MCF 10A (cell line): ENCODE measurements at regions of chr2 and their contacts with region 1.

Region 1: DNA sequence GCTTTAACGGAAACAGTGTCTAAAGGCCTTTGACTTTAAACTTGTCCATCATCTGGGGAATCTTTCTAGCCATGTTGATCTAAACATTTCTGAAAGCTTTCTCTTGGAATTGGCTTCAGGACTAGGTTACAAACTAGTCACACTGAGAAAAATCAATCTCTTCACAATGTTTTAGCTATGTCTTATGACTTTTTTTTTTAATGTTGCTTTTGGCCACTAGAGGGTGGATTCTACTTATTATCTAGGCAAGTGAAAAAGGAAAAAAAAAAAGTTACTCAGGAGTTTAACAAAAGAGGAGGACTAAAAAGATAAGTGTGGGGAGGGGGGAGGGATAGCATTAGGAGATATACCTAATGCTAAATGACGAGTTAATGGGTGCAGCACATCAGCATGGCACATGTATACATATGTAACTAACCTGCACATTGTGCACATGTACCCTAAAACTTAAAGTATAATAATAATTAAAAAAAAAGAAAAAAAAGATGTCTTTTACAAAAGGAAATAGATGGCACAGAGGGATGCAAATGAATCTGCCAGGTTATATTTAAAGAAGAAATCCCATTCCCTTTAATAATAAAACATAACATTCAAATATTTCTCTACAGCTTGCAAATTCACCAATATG is 160.4 kb upstream of the PID1 start:
- DNase-seq: peak; percentile 69
- H3K4me3 Mint-ChIP-seq: no peak overlapping the region
- H3K27ac Mint-ChIP-seq: peak overlapping the region; percentile 75
- H3K4me1 Mint-ChIP-seq: peaks cover 32% of the 10 kb centered on the region
- H3K27me3 Mint-ChIP-seq: no peaks in the 10 kb centered on the region
- CTCF ChIP-seq: peak; percentile 48

Region 2: GRCh38 chr2:228699400-228699799 is 732.0 kb before region 1 on chr2:
- CTCF ChIA-PET with region 1: no interaction called
- POLR2A ChIA-PET with region 1: no interaction called
- intact Hi-C with region 1: loop called (anchors 5 kb)
- DNase-seq: peak; percentile 59
- H3K4me3 Mint-ChIP-seq: no peak overlapping the region
- H3K27ac Mint-ChIP-seq: no peak overlapping the region
- H3K4me1 Mint-ChIP-seq: peaks cover 10% of the 10 kb centered on the region
- H3K27me3 Mint-ChIP-seq: no peaks in the 10 kb centered on the region
- CTCF ChIP-seq: peak; percentile 51

Region 3: DNA sequence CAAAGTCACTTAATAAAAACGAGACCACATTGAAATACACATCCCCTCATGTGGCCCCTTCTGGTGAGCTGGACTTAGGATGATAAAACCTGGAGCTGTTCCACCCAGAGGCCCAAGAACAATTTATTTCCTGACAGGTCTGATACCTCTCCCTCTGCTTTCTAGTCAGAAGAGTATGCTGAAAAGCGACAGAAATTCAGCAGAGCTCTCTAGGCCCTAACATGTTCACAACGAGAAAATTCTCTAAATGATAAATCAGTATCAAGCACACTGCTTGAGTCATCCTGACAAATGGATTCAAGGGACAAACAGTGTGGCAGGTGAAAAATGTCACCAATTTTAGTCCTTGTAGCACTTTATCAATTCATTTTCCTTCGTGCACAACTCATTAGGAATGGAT is 393.8 kb before region 1 on chr2:
- CTCF ChIA-PET with region 1: no interaction called
- POLR2A ChIA-PET with region 1: no interaction called
- intact Hi-C with region 1: no loop called
- DNase-seq: no peak
- H3K4me3 Mint-ChIP-seq: no peak overlapping the region
- H3K27ac Mint-ChIP-seq: no peak overlapping the region
- H3K4me1 Mint-ChIP-seq: no peaks in the 10 kb centered on the region
- H3K27me3 Mint-ChIP-seq: no peaks in the 10 kb centered on the region
- CTCF ChIP-seq: no peak

Region 4: GRCh38 chr2:229133155-229133772 is 298.2 kb before region 1 on chr2:
- CTCF ChIA-PET with region 1: interaction called, 4 read pairs
- POLR2A ChIA-PET with region 1: interaction called, 3 read pairs
- intact Hi-C with region 1: loop called (anchors 1 kb)
- DNase-seq: peak; percentile 76
- H3K4me3 Mint-ChIP-seq: no peak overlapping the region
- H3K27ac Mint-ChIP-seq: no peak overlapping the region
- H3K4me1 Mint-ChIP-seq: peaks cover 11% of the 10 kb centered on the region
- H3K27me3 Mint-ChIP-seq: no peaks in the 10 kb centered on the region
- CTCF ChIP-seq: peak; percentile 57

Region 5: DNA sequence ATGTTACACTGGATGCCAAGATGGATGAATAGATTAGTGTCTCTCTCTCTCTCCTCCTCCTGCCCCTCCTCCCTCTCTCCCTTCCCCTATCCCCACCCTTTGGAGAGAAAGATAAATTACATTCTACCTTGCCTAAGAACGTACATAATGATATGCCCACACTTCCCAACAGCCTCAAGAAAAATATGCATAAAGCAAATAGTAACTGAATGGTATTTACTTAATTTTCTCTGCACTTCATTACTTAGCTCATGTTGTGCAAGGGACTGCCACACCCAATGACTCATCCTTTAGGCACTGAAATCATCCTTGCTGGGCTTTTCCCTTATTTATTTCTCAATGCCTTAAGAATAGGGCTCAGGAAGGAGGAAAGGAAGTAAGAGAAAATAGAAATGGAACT is 23.1 kb before region 1 on chr2:
- CTCF ChIA-PET with region 1: no interaction called
- POLR2A ChIA-PET with region 1: interaction called, 22 read pairs
- intact Hi-C with region 1: no loop called
- DNase-seq: peak; percentile 97
- H3K4me3 Mint-ChIP-seq: peak overlapping the region; percentile 48
- H3K27ac Mint-ChIP-seq: peak overlapping the region; percentile 99
- H3K4me1 Mint-ChIP-seq: peaks cover 57% of the 10 kb centered on the region
- H3K27me3 Mint-ChIP-seq: no peaks in the 10 kb centered on the region
- CTCF ChIP-seq: no peak

Region 6: GRCh38 chr2:229489016-229489415 is 57.6 kb after region 1 on chr2:
- CTCF ChIA-PET with region 1: interaction called, 9 read pairs
- POLR2A ChIA-PET with region 1: interaction called, 10 read pairs
- intact Hi-C with region 1: no loop called
- DNase-seq: peak; percentile 99
- H3K4me3 Mint-ChIP-seq: peak overlapping the region; percentile 68
- H3K27ac Mint-ChIP-seq: peak overlapping the region; percentile 46
- H3K4me1 Mint-ChIP-seq: peaks cover 39% of the 10 kb centered on the region
- H3K27me3 Mint-ChIP-seq: no peaks in the 10 kb centered on the region
- CTCF ChIP-seq: no peak